CD4-positive, alpha-beta T cell (primary cell): ENCODE measurements at regions of chr7 and their contacts with region 1.

Region 1: DNA sequence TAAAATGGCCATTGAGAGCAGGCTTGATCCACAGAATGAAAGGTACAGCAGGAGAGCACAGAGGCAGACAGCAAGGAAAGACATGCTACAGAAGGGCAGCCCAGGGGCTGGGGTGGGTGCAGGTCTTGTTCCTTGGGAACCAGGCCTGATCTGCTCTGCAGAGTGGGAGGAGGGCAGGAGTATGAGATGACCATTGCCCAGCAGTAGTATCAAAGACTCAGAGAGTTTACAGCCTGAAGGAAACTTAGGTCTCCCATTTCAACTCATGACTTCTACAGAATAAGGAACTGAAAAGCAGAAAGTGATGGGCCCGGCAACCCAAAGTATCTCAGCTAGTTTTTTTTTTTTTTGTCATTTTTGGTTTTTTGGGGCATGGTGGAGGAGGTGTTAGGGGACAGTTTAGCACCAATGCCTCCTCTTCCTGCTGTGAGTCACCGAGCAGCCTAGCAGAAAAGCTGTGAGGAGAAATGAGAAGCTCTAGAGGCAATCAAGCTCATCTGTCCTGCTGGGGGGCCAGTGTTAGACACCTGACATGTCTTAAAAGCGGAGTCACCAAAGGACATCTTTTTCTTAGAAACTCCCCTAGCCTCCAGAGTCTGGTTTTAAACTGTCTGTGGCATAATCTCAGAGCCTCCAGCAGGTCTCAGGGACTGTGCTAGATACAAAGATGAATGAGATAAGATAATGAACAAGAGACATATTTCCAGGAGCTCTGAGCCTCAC is 34.3 kb upstream of the HERPUD2 start:
- DNase-seq: peak in 5 of 14 experiments; percentile 7 to 72 (median 57)
- ATAC-seq: no peak
- H3K4me3 ChIP-seq: no peak overlapping the region
- H3K4me3 Mint-ChIP-seq: no peak overlapping the region
- H3K27ac ChIP-seq: peak overlapping the region in 1 of 2 donors; percentile 3
- H3K27ac Mint-ChIP-seq: no peak overlapping the region
- H3K4me1 ChIP-seq: peaks cover 52% of the 10 kb centered on the region
- H3K4me1 Mint-ChIP-seq: peaks cover 57% of the 10 kb centered on the region
- H3K27me3 ChIP-seq: no peaks in the 10 kb centered on the region
- H3K27me3 Mint-ChIP-seq: no peaks in the 10 kb centered on the region
- CTCF ChIP-seq: no peak

Region 2: DNA sequence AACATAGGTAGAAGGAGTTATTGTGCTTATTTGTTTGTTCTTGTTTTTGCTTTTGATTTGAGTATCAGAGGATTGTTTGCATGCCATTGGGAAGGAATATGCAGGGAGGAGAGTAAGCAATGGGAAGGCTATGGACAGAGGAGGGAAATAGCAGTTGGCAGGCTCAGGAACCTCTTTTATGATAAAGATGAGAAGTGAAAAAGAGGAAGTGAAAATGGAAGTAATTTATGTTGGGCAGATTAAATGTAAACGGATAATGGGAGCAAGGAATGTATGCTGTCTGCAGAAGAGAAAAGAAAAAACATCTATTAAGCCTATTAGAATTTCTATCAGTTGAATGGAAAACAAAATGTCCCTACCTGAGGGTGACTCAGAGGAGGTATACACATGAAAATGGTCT is 1161.3 kb before region 1 on chr7:
- CTCF ChIA-PET with region 1: no interaction called
- POLR2A ChIA-PET with region 1: no interaction called
- intact Hi-C with region 1: no loop called
- DNase-seq: no peak
- ATAC-seq: no peak
- H3K4me3 ChIP-seq: no peak overlapping the region
- H3K4me3 Mint-ChIP-seq: no peak overlapping the region
- H3K27ac ChIP-seq: no peak overlapping the region
- H3K27ac Mint-ChIP-seq: no peak overlapping the region
- H3K4me1 ChIP-seq: no peaks in the 10 kb centered on the region
- H3K4me1 Mint-ChIP-seq: no peaks in the 10 kb centered on the region
- H3K27me3 ChIP-seq: no peaks in the 10 kb centered on the region
- H3K27me3 Mint-ChIP-seq: no peaks in the 10 kb centered on the region
- CTCF ChIP-seq: no peak

Region 3: DNA sequence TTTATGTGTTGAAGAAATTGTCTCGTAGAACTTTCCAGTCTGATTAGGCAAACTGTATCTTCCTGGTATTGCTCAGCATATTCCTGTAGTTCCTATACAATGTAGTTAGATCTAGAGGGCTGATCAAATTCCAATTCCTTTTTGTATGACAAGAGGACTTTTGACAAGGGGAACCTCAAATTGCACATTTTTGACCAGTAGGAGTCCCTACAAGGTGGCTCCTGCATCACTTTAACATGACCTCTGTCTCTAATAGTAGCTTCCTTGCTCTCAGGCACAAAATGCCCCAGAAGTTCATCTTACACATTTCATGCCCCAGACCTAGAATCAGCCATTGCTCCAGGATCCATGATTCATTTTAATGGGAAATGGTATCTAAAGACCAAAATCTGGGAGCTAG is 53.0 kb before region 1 on chr7:
- CTCF ChIA-PET with region 1: interaction called, 3 read pairs
- POLR2A ChIA-PET with region 1: no interaction called
- intact Hi-C with region 1: loop called in 1 of 2 experiments (anchors 5 kb)
- DNase-seq: peak in 3 of 14 experiments; percentile 23 to 31 (median 28)
- ATAC-seq: no peak
- H3K4me3 ChIP-seq: no peak overlapping the region
- H3K4me3 Mint-ChIP-seq: no peak overlapping the region
- H3K27ac ChIP-seq: no peak overlapping the region
- H3K27ac Mint-ChIP-seq: no peak overlapping the region
- H3K4me1 ChIP-seq: peaks cover 17% of the 10 kb centered on the region
- H3K4me1 Mint-ChIP-seq: peaks cover 80% of the 10 kb centered on the region
- H3K27me3 ChIP-seq: no peaks in the 10 kb centered on the region
- H3K27me3 Mint-ChIP-seq: no peaks in the 10 kb centered on the region
- CTCF ChIP-seq: no peak

Region 4: GRCh38 chr7:35707422-35707821 is 21.8 kb before region 1 on chr7:
- CTCF ChIA-PET with region 1: interaction called, 7 read pairs
- POLR2A ChIA-PET with region 1: interaction called, 16 read pairs
- intact Hi-C with region 1: loop called in 1 of 2 experiments (anchors 1 kb)
- DNase-seq: no peak
- ATAC-seq: no peak
- H3K4me3 ChIP-seq: no peak overlapping the region
- H3K4me3 Mint-ChIP-seq: no peak overlapping the region
- H3K27ac ChIP-seq: no peak overlapping the region
- H3K27ac Mint-ChIP-seq: no peak overlapping the region
- H3K4me1 ChIP-seq: peaks cover 13% of the 10 kb centered on the region
- H3K4me1 Mint-ChIP-seq: peaks cover 12% of the 10 kb centered on the region
- H3K27me3 ChIP-seq: no peaks in the 10 kb centered on the region
- H3K27me3 Mint-ChIP-seq: no peaks in the 10 kb centered on the region
- CTCF ChIP-seq: no peak

Region 5: DNA sequence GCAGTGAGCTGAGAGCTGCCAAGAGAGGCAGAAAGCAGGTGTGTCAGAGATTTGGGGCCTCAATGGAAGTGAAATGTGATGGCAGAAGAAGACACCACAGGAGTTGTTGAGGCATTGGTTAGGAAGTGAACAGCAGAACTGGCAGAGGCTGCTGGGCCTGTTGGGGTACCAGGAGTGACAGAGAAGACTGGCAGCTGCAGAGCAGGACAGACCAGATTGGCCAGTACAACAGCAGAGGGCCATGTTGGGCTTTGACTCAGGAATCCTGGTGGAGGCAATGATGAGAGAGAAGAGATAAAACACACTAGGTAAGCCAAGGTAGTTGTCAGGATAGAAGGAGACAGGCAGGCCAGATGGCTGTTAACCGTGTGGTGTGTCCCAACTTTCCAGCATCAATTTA is 14.4 kb before region 1 on chr7:
- CTCF ChIA-PET with region 1: interaction called, 7 read pairs
- POLR2A ChIA-PET with region 1: interaction called, 16 read pairs
- intact Hi-C with region 1: no loop called
- DNase-seq: no peak
- ATAC-seq: no peak
- H3K4me3 ChIP-seq: no peak overlapping the region
- H3K4me3 Mint-ChIP-seq: no peak overlapping the region
- H3K27ac ChIP-seq: no peak overlapping the region
- H3K27ac Mint-ChIP-seq: no peak overlapping the region
- H3K4me1 ChIP-seq: peaks cover 4% of the 10 kb centered on the region
- H3K4me1 Mint-ChIP-seq: peaks cover 5% of the 10 kb centered on the region
- H3K27me3 ChIP-seq: no peaks in the 10 kb centered on the region
- H3K27me3 Mint-ChIP-seq: no peaks in the 10 kb centered on the region
- CTCF ChIP-seq: no peak

Region 6: DNA sequence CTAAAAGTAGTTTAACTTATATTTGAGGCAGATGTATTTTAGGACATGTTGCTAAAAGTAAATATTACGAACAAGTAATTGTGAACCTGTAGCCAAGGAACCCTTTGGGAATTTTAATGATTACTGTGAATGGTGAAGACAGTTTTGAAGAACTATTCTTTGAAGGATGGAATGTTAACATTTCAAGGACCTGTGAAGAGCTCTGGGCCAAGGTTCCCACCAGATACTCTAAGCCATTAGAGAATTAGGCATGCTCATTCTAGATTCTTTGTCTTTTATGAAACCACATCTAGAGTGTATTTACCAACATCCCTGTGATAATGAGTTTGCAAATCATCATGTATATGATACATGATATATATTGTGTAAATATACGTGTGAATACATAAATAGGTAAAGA is 171.4 kb after region 1 on chr7:
- CTCF ChIA-PET with region 1: no interaction called
- POLR2A ChIA-PET with region 1: no interaction called
- intact Hi-C with region 1: no loop called
- DNase-seq: no peak
- ATAC-seq: no peak
- H3K4me3 ChIP-seq: no peak overlapping the region
- H3K4me3 Mint-ChIP-seq: no peak overlapping the region
- H3K27ac ChIP-seq: no peak overlapping the region
- H3K27ac Mint-ChIP-seq: no peak overlapping the region
- H3K4me1 ChIP-seq: no peaks in the 10 kb centered on the region
- H3K4me1 Mint-ChIP-seq: no peaks in the 10 kb centered on the region
- H3K27me3 ChIP-seq: no peaks in the 10 kb centered on the region
- H3K27me3 Mint-ChIP-seq: no peaks in the 10 kb centered on the region
- CTCF ChIP-seq: no peak